ENCODE measurements at regions of chr1 and their contacts with region 1.

Region 1: DNA sequence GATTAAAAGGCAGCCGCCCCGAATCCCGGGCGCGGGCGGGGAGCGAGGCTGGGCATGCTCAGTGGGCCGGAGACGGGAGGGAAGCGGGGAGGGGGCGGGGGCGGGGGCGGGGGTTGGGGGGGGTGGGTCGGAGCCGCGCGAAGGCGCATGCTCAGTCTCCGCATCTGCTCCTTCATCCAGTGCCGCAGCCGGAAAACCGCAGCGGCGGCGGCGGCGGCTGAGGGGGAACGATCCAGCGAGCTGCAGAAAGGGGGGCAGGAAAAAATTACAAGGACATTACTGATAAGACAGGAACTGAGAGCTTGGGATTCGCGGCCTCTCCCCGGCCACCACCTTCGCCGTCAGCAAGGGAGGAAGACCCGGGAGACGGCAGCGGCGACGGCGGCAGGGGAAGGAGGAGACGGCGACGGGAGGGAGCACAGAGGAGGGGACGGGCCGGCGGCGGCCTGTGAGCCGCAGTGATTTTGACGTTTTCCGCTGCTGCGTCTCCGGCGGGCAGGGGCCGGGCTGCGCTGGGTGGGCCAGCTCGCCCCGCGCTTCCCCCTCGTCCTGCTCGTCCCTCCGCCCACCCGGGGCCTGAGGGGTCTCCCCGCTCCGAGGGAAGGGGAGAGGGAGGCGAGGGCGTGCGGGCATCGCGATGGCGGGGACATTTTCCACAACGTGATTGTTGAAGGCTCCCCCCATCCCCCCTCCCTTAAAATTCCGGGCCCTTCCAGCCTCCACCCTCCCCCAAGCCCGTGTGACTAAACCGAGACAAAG is at the start of gene CAMSAP2:
- DNase-seq: peak; percentile 47 to 96
- H3K4me3 ChIP-seq: peak within 1 kb of the TSS; percentile 77 to 99
- H3K27ac ChIP-seq: peak within 1 kb of the TSS; percentile 97 to 100
- H3K4me1 ChIP-seq: peaks cover 0 to 15% of the 10 kb centered on the region in 2 donors
- H3K27me3 ChIP-seq: no peaks in the 10 kb centered on the region
- CTCF ChIP-seq: no peak
- total RNA-seq, gene CAMSAP2: 22.4 TPM

Region 2: DNA sequence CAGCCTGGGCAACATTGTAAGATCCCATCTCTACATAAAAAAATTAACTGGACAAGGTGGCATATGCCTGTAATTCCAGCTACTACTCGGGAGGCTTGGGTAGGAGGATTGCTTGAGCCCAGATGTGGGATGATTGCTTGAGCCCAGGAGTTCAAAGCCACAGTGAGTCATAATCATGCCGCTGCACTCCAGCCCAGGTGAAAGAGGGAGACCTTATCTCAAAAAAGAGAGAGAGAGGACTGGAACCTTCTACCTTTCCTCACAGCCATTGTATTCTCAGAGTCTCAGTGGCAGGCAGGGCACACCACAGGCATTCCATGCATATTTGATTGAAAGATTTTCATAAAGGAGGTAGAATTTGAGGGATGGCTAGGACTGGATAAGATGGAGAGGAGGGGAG is 196.8 kb before region 1 on chr1:
- intact Hi-C with region 1: no loop called
- DNase-seq: no peak
- H3K4me3 ChIP-seq: no peak overlapping the region
- H3K27ac ChIP-seq: no peak overlapping the region
- H3K4me1 ChIP-seq: no peaks in the 10 kb centered on the region
- H3K27me3 ChIP-seq: no peaks in the 10 kb centered on the region
- CTCF ChIP-seq: no peak

Region 3: GRCh38 chr1:200669314-200670241 is 69.3 kb before region 1 on chr1 and contains the start of gene DDX59:
- intact Hi-C with region 1: loop called (anchors 1 kb)
- DNase-seq: peak; percentile 88 to 98
- H3K4me3 ChIP-seq: peak within 1 kb of the TSS; percentile 72 to 81
- H3K27ac ChIP-seq: peak within 1 kb of the TSS; percentile 95 to 99
- H3K4me1 ChIP-seq: peaks cover 0 to 28% of the 10 kb centered on the region in 2 donors
- H3K27me3 ChIP-seq: no peaks in the 10 kb centered on the region
- CTCF ChIP-seq: no peak
- total RNA-seq, gene DDX59: 7.6 TPM

Region 4: GRCh38 chr1:200776950-200777349 is 38.0 kb after region 1 on chr1:
- intact Hi-C with region 1: loop called (anchors 2 kb)
- DNase-seq: no peak
- H3K4me3 ChIP-seq: no peak overlapping the region
- H3K27ac ChIP-seq: peak overlapping the region; percentile 61 to 73
- H3K4me1 ChIP-seq: peaks cover 3 to 26% of the 10 kb centered on the region in 2 donors
- H3K27me3 ChIP-seq: no peaks in the 10 kb centered on the region
- CTCF ChIP-seq: no peak